ENCODE measurements at regions of chr6 and their contacts with region 1.

Region 1: GRCh38 chr6:168956884-168957730 is 296.5 kb downstream of the THBS2 start:
- DNase-seq: peak; percentile 53 to 59
- ATAC-seq: peak; percentile 74 to 94 (median 86)
- H3K4me3 ChIP-seq: no peak overlapping the region
- H3K27ac ChIP-seq: no peak overlapping the region
- H3K4me1 ChIP-seq: peaks cover 0 to 12% (median 5%) of the 10 kb centered on the region in 9 donors
- H3K27me3 ChIP-seq: peaks cover 0 to 17% (median 5%) of the 10 kb centered on the region in 7 donors
- CTCF ChIP-seq: peak; percentile 63 to 89 (median 83)

Region 2: DNA sequence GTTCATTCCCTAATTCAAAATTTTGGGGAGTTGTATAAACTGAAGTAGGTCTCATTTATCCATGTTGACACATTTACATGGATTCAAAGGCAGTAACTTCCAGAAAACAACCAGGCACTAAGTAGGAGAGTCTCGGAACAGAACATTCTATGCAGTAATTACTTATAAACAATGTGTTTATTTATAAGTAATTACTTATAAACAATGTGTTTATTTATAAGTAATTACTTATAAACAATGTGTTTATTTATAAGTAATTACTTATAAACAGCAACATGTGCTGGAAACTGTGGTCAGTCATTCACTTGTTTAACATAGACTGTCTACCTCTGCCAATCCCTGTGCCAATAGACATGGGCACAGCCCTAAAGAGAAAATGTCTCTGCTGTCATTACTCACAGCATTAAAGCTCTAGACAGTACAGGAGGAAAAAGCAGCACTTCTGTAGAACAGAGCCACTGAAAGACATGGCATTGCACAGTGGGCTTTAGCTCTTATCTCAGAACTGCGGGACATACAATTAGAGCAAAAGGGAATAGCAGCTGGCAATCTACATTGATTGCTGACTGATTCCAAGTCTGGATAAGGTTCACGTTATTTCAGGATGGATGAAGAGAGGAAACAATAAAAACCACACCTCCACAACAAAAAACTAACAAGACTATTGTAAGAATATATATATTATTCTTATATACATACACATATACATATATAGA is 556.5 kb after region 1 on chr6:
- intact Hi-C with region 1: loop called in 1 of 10 experiments (anchors 10 kb)
- DNase-seq: no peak
- ATAC-seq: no peak
- H3K4me3 ChIP-seq: no peak overlapping the region
- H3K27ac ChIP-seq: no peak overlapping the region
- H3K4me1 ChIP-seq: no peaks in the 10 kb centered on the region
- H3K27me3 ChIP-seq: no peaks in the 10 kb centered on the region
- CTCF ChIP-seq: no peak

Region 3: GRCh38 chr6:169520104-169520503 is 563.0 kb after region 1 on chr6:
- intact Hi-C with region 1: loop called in 8 of 10 experiments (anchors 2 to 10 kb)
- DNase-seq: no peak
- ATAC-seq: peak in 1 of 8 donors; percentile 44
- H3K4me3 ChIP-seq: no peak overlapping the region
- H3K27ac ChIP-seq: no peak overlapping the region
- H3K4me1 ChIP-seq: no peaks in the 10 kb centered on the region
- H3K27me3 ChIP-seq: no peaks in the 10 kb centered on the region
- CTCF ChIP-seq: peak in 6 of 9 donors; percentile 23 to 59 (median 52)

Region 4: DNA sequence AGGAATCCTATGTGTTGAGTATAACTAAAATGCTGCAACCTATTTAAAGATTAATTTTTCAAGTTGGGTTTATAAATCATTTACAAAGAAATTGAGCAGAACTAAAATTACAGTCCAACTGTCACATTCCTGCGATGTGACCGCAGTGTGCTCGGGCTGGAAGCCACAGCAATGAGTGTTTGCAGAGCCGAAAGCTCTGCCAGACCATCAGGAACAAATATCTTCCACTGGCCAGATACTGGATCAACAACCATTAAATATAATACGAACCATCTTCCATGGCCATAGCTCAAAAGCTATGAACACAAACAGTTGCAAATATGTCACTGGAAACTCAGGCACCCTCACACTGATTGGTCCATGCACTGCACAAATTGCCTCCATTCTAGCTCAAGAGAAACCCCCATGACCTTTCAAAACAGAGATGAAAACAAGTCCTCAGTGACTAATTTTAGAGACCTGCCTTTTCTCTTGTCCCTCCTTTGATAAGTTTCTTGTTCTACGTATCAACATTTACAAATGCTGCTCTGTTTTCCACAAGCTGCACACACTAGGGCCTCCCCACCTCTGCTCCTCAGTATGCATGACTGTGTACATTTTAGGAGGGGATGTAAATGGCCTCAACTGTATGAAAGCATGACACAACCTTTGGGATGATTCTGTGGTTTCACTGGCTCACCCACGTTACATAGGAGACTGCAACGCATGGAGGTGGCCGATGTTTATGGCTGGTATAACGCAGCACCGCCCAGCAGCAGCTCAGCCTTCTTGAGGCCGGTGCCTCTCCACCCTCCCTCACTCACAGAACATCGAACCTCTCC is 573.0 kb after region 1 on chr6:
- intact Hi-C with region 1: loop called in 4 of 10 experiments (anchors 10 kb)
- DNase-seq: no peak
- ATAC-seq: peak in 7 of 8 donors; percentile 38 to 88 (median 69)
- H3K4me3 ChIP-seq: no peak overlapping the region
- H3K27ac ChIP-seq: peak overlapping the region in 2 of 10 donors; percentile 26 to 57
- H3K4me1 ChIP-seq: peaks cover 0 to 13% (median 4%) of the 10 kb centered on the region in 9 donors
- H3K27me3 ChIP-seq: no peaks in the 10 kb centered on the region
- CTCF ChIP-seq: no peak

Region 5: DNA sequence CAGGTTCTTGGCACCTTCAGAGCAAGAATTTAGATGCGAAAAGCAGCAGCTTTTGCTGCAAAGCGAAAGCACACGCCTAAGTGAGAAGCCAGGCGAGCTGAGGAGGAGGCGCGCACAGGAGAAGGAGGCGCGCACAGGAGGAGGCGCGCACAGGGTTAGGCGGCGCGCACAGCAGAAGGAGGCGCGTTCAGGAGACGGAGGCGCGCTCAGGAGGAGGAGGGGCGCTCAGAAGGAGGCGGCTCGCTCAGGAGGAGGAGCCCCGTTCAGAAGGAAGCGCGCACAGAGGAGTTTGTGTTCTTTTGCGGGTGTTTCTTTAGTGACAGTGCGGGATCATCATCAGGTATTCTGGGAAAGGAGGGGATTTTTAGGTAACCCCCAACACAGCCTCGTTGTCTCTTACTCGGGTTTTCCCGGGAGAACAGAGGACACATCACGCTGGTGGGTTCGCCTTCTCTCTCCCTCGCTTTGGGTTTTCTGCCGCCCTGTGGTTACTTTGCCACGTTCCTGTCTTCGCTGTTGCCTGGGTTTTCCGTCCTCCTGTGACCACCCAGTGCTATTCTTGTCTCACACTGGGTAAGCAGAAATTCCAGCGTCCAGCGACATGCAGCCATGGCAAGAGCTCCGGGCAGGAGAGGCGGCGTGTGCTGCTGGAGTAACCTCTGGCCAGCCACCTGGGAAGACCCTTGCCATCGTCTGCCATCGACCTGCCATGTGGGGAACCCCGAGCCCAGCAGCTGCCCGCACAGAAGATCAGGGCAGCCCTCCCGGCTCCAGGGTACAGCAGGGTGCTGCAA is 697.7 kb after region 1 on chr6:
- intact Hi-C with region 1: loop called in 1 of 10 experiments (anchors 10 kb)
- DNase-seq: peak in 1 of 2 donors; percentile 69
- ATAC-seq: peak; percentile 73 to 98 (median 98)
- H3K4me3 ChIP-seq: peak overlapping the region in 9 of 10 donors; percentile 8 to 62 (median 47)
- H3K27ac ChIP-seq: peak overlapping the region in 7 of 10 donors; percentile 16 to 73 (median 65)
- H3K4me1 ChIP-seq: peaks cover 0 to 7% (median 0%) of the 10 kb centered on the region in 9 donors
- H3K27me3 ChIP-seq: no peaks in the 10 kb centered on the region
- CTCF ChIP-seq: peak in 4 of 9 donors; percentile 14 to 31 (median 24)

Region 6: GRCh38 chr6:170516783-170517616 is 1559.9 kb after region 1 on chr6:
- intact Hi-C with region 1: loop called in 1 of 10 experiments (anchors 10 kb)
- DNase-seq: peak in 1 of 2 donors; percentile 15
- ATAC-seq: peak in 7 of 8 donors; percentile 39 to 81 (median 61)
- H3K4me3 ChIP-seq: no peak overlapping the region
- H3K27ac ChIP-seq: no peak overlapping the region
- H3K4me1 ChIP-seq: peaks cover 0 to 3% (median 1%) of the 10 kb centered on the region in 9 donors
- H3K27me3 ChIP-seq: peaks cover 0 to 4% (median 0%) of the 10 kb centered on the region in 7 donors
- CTCF ChIP-seq: peak; percentile 50 to 82 (median 70)

Measured in heart right ventricle (tissue), 16 donors.